Pancreas (tissue), 10 donors: ENCODE measurements at regions of chr9 and their contacts with region 1.

Region 1: DNA sequence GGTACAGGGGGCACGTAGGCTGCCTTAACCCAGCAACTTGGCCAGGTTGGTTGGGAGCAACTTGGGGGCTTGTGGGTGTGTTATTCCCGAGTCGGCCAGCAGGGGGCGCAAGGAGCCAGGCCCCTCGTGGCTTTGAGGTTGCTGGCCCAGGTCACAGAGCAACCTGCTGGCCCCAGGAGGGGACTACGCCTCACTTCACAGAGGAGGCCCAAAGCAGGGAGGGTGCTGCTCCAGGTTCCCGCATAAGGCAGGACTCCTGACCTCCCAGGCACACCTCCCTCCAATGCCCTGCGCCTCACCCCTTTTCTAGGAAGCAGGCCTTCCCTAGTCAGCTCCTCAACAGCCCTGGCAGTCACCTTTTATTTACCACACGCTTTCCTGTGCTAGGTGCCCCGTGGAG is 18.1 kb downstream of the KYAT1 start:
- DNase-seq: peak; percentile 58 to 95 (median 82)
- ATAC-seq: peak; percentile 76 to 91 (median 88)
- H3K4me3 ChIP-seq: no peak overlapping the region
- H3K27ac ChIP-seq: no peak overlapping the region
- H3K4me1 ChIP-seq: peaks cover 0 to 13% (median 9%) of the 10 kb centered on the region in 3 donors
- H3K27me3 ChIP-seq: no peaks in the 10 kb centered on the region
- CTCF ChIP-seq: peak; percentile 94 to 99 (median 97)

Region 2: DNA sequence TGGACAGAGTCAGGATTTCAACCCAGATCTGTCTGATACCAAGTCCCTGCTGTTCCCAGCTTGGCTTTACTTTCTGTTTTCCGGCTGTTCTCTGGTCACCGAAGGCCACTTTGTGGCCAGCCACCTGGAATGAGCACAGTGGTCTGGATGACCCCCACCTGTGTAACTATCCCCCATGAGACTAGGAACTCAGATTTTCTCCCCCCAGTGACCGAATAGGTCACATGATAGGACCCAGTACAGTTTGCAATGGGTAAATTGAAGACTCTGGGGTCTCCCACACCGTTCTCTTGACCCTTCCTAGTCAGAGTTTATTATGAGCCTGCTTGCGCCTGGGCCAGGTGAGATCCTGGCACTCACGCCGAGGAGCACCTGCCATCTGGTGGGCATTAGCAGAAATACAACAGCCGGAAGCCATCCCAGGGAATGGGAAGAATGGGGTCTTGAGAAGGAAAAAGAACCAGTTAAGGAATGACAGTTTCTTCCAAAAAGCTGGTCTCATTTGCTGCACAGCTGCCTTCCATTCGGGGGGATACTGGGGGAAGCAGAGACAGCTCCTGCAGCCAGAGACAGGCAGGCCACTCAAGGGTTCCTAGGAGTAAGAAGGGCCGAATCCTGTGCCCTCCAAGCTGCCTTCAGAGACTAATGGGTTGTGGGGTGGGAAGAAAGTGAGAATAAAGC is 64.2 kb after region 1 on chr9:
- intact Hi-C with region 1: loop called in 2 of 3 experiments (anchors 5 to 10 kb)
- DNase-seq: peak in 5 of 6 donors; percentile 46 to 82 (median 69)
- ATAC-seq: peak; percentile 88 to 96 (median 94)
- H3K4me3 ChIP-seq: no peak overlapping the region
- H3K27ac ChIP-seq: peak overlapping the region in 1 of 4 donors; percentile 30
- H3K4me1 ChIP-seq: peaks cover 0 to 10% (median 5%) of the 10 kb centered on the region in 3 donors
- H3K27me3 ChIP-seq: no peaks in the 10 kb centered on the region
- CTCF ChIP-seq: peak; percentile 69 to 75 (median 72)